IMR-90 (cell line): ENCODE measurements at regions of chr3 and their contacts with region 1.

Region 1: DNA sequence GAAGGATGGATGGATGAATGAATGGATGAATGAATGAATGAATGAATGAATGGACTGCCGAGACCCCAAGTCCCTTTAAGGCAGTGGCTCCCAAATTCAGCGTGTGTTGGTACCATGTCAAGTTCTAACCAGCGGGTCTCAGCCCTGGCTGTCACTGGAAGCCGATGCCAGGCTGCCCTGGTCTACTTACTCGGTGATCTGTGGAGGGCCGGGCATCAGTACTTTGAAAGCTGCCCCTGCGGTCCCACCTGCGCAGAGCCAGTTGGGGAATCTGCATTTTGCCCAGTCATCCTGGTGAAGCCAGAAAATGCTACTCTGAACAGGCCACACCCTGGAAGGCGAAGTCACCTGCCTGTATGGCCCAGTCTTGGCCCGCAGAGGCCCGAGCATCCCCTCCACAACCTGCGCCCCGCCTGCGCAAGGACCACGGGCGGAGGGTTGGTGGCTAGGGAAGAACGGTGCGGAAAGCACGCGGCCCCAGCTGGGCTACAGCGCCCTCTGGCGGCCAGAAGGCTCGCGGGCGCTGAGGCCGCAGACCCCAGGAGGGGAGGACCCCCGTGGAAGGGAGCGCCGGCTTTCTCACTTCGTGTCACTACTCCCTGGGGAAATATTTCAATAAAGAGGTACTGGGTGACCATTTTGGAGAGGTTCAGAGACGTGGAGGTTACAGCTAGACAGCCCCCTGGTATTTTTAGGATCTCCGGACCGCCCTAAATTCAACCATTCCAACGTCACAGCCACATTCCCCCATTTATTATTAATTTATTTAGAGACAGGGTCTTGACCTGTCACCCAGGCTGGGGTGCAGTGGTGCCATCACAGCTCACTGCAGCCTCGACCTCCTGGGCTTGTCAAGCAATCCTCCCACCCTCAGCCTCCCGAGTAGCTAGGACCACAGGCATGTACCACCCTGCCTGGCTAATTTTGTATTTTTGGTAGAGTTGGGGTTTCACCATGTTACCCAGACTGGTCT is 34.9 kb downstream of the PRKCD start:
- DNase-seq: peak; percentile 19
- ATAC-seq: peak; percentile 68
- H3K4me3 ChIP-seq: no peak overlapping the region
- H3K27ac ChIP-seq: no peak overlapping the region
- H3K4me1 ChIP-seq: peaks cover 16% of the 10 kb centered on the region
- H3K27me3 ChIP-seq: no peaks in the 10 kb centered on the region; the same call in 1 of the 2 replicates
- CTCF ChIP-seq: peak; percentile 91
- POLR2A ChIP-seq: no peak
- RAD21 ChIP-seq: peak; percentile 90

Region 2: GRCh38 chr3:53114011-53114400 is 81.9 kb before region 1 on chr3:
- CTCF ChIA-PET with region 1: interaction called, 6 read pairs
- POLR2A ChIA-PET with region 1: no interaction called
- dilution Hi-C with region 1: no loop called
- in situ Hi-C with region 1: no loop called
- intact Hi-C with region 1: loop called (anchors 1 kb)
- DNase-seq: peak; percentile 78
- ATAC-seq: peak; percentile 90
- H3K4me3 ChIP-seq: no peak overlapping the region
- H3K27ac ChIP-seq: peak overlapping the region; percentile 8; the same call in 1 of the 2 replicates
- H3K4me1 ChIP-seq: peaks cover 12% of the 10 kb centered on the region
- H3K27me3 ChIP-seq: no peaks in the 10 kb centered on the region
- CTCF ChIP-seq: peak; percentile 92
- POLR2A ChIP-seq: no peak
- RAD21 ChIP-seq: peak; percentile 92

Region 3: DNA sequence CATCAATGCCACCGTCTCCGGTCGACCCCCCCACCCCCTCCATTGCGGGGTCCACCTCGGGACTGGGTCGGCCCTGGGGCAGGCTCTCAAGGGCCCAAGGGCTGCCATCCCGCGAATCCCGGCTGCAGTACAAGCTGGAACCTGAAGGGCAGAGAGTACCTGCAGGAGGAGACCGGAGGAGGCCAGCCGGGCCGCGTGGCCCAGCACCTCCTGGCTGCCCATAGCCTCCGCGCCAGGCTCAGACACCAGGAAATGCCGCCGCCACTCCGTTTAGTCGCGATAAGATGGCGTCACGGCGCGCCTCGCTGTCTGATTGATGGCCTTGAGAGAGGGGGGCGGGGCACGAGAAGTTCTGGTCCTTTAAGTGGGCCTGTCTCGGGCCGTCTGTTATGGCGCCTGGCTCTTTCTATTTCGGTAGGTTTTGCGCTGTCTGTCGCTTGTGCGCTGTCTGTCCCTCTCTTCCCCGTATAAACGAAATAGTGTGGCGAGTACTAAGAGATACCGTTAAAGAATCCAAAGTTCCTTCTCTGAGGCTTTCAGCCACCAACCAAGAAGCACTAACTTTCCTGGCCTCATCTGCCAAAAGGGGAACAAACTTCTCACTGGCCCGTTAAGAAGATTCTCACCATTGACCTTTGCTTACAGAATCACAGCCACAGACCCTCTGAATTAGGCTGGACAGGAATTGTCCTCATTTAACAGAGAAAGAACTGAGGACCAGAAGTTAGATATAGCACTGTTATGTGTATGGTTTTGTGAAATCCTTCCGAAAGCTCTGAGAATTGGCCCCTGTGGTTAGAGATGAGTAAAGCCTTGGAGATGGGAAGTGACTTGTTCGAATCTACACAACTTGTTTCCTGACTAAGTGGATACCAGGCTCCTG is 65.5 kb before region 1 on chr3 and contains the start of gene RFT1:
- CTCF ChIA-PET with region 1: interaction called, 13 read pairs
- POLR2A ChIA-PET with region 1: no interaction called
- dilution Hi-C with region 1: no loop called
- in situ Hi-C with region 1: loop called (anchors 5 kb)
- intact Hi-C with region 1: loop called (anchors 1 kb)
- DNase-seq: peak; percentile 94
- ATAC-seq: peak; percentile 94
- H3K4me3 ChIP-seq: peak within 1 kb of the TSS; percentile 89
- H3K27ac ChIP-seq: peak within 1 kb of the TSS; percentile 88
- H3K4me1 ChIP-seq: peaks cover 6% of the 10 kb centered on the region
- H3K27me3 ChIP-seq: no peaks in the 10 kb centered on the region
- CTCF ChIP-seq: no peak
- POLR2A ChIP-seq: peak; percentile 91
- RAD21 ChIP-seq: no peak
- total RNA-seq, gene RFT1: 23.5 and 28.6 TPM in 2 replicates

Region 4: DNA sequence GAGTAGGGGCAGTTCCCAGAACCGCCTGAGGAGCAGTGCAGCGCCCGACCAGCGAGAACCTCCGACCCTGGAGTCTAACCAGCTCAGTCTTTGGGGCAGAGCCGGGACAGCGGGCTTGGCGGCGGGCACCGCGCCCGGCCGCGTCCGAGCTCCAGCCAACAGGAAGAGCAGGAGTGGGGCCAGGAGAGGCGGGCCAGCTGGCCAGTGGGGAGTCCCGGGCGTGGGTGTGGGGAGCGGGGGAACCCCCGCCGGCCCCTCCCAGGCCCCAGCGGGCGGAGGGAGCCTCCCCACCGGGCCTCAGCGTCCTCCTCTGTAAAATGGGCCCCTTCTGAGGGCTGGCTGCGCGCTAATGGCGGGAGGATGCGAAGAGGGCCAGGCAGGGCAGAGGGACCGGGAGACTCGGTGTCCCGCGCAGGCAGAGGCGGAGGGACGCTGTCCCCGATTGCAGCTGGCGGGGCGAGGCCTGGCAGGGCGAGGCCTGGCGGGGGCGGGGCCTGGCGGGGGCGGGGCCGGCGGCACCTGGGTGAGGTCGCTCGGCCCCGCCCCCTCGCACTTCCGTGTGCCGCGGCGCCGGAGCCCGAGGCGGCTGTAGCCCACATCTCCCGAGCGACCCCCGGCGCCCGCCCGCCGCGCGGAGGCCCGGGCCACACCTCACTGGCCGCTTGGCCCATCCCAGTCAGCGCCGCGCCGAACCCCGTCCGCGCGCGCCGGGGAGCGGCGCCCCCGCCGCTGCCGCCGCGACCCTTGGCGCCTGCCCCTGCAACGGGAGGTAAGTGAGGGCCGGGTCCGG is 35.0 kb before region 1 on chr3 and contains the start of gene PRKCD:
- CTCF ChIA-PET with region 1: no interaction called
- POLR2A ChIA-PET with region 1: no interaction called
- dilution Hi-C with region 1: no loop called
- in situ Hi-C with region 1: no loop called
- intact Hi-C with region 1: loop called (anchors 2 kb)
- DNase-seq: peak; percentile 78
- ATAC-seq: peak; percentile 78
- H3K4me3 ChIP-seq: peak within 1 kb of the TSS; percentile 99
- H3K27ac ChIP-seq: peak within 1 kb of the TSS; percentile 65; the same call in 1 of the 2 replicates
- H3K4me1 ChIP-seq: peaks cover 21% of the 10 kb centered on the region; the same call in 1 of the 2 replicates
- H3K27me3 ChIP-seq: peaks cover 19% of the 10 kb centered on the region
- CTCF ChIP-seq: peak; percentile 49
- POLR2A ChIP-seq: no peak
- RAD21 ChIP-seq: peak; percentile 39
- total RNA-seq, gene PRKCD: 3.3 and 4.3 TPM in 2 replicates

Region 5: DNA sequence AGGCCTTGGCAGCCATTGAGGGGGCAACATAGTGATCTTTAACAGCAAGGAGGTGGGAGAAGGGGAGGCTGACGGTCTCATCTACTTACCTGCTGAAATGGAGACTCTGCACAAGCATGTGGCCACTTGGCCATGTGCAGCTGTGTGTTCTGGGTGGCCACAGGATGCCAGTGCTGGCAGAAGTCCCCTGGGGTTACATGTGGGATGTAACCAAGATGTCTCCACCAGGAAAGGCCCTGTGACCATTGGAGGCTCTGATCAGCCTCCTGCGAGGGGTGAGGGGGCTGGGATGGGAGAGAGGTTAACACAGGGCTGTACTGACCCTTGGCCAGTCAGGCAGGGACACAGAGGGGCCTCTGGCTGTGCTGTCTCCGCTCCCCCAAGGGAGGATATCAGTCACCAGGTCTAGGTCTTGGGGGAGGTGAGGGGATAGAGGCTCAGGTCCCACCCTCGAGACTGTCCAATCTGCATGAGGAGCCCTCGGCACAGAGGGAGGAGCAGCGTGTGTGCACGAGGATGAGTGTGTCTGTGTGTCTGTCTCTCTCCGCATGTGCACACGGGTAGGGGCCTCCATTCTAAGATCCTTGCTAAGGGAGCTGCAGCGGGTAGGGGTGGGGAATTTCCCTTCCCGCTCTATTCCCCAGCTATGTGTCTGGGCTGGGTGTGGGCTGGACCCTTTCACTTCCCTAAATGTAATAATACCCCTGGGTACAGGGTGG is 15.4 kb before region 1 on chr3:
- CTCF ChIA-PET with region 1: no interaction called
- POLR2A ChIA-PET with region 1: no interaction called
- dilution Hi-C with region 1: no loop called
- in situ Hi-C with region 1: no loop called
- intact Hi-C with region 1: no loop called
- DNase-seq: no peak
- ATAC-seq: no peak
- H3K4me3 ChIP-seq: no peak overlapping the region
- H3K27ac ChIP-seq: no peak overlapping the region
- H3K4me1 ChIP-seq: no peaks in the 10 kb centered on the region
- H3K27me3 ChIP-seq: no peaks in the 10 kb centered on the region
- CTCF ChIP-seq: no peak
- POLR2A ChIP-seq: no peak
- RAD21 ChIP-seq: no peak